MCF 10A (cell line): ENCODE measurements at regions of chr1 and their contacts with region 1.

Region 1: GRCh38 chr1:101438359-101438758 is 201.5 kb downstream of the S1PR1 start:
- DNase-seq: peak; percentile 50
- H3K4me3 Mint-ChIP-seq: no peak overlapping the region
- H3K27ac Mint-ChIP-seq: no peak overlapping the region
- H3K4me1 Mint-ChIP-seq: no peaks in the 10 kb centered on the region
- H3K27me3 Mint-ChIP-seq: peaks cover 80% of the 10 kb centered on the region
- CTCF ChIP-seq: peak; percentile 22

Region 2: DNA sequence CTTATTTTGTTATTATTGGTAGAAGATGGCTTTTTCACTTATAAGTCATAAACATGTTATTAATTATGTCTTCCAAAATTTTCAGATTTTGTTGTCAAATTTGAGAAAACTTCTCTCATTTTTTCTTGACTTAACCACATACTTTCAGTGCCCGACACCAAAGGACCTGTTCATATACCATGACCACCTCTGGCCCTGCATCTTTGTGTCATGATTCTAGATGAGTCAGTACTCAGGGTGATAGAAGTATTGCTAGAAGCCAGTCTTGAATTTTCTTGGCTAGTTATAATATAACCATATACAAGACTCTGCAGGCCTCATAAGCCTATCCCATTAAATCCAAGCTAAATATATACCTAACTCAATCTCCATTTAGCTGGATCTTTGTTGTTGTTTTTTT is 377.4 kb before region 1 on chr1:
- CTCF ChIA-PET with region 1: no interaction called
- POLR2A ChIA-PET with region 1: no interaction called
- intact Hi-C with region 1: no loop called
- DNase-seq: no peak
- H3K4me3 Mint-ChIP-seq: no peak overlapping the region
- H3K27ac Mint-ChIP-seq: no peak overlapping the region
- H3K4me1 Mint-ChIP-seq: peaks cover 8% of the 10 kb centered on the region
- H3K27me3 Mint-ChIP-seq: no peaks in the 10 kb centered on the region
- CTCF ChIP-seq: no peak

Region 3: DNA sequence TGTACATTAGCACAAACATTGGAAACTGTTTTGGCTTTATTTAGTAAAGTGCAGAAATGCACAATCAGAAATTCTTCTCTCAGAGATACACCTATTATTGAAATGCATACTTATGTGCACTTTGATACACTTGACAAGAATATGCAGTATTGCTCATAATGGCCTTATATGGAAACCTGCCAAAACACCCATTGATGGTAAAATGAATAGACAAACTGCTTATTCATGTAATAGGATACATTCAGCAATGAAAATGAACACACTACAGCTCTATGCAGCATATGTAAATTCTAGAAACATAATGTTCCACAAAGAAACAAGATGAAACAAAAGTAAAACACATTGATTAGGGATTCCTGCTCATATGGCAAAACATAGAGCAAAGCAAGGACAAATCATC is 22.4 kb after region 1 on chr1:
- CTCF ChIA-PET with region 1: interaction called, 3 read pairs
- POLR2A ChIA-PET with region 1: no interaction called
- intact Hi-C with region 1: loop called (anchors 2 kb)
- DNase-seq: peak; percentile 10
- H3K4me3 Mint-ChIP-seq: no peak overlapping the region
- H3K27ac Mint-ChIP-seq: no peak overlapping the region
- H3K4me1 Mint-ChIP-seq: no peaks in the 10 kb centered on the region
- H3K27me3 Mint-ChIP-seq: no peaks in the 10 kb centered on the region
- CTCF ChIP-seq: no peak